ENCODE measurements at regions of chr11 and their contacts with region 1.

Region 1: GRCh38 chr11:35082321-35083182 is 56.4 kb upstream of the CD44 start:
- DNase-seq: peak; percentile 92
- H3K4me3 Mint-ChIP-seq: peak overlapping the region; percentile 77
- H3K27ac Mint-ChIP-seq: peak overlapping the region; percentile 91
- H3K4me1 Mint-ChIP-seq: peaks cover 84% of the 10 kb centered on the region
- H3K27me3 Mint-ChIP-seq: no peaks in the 10 kb centered on the region

Region 2: DNA sequence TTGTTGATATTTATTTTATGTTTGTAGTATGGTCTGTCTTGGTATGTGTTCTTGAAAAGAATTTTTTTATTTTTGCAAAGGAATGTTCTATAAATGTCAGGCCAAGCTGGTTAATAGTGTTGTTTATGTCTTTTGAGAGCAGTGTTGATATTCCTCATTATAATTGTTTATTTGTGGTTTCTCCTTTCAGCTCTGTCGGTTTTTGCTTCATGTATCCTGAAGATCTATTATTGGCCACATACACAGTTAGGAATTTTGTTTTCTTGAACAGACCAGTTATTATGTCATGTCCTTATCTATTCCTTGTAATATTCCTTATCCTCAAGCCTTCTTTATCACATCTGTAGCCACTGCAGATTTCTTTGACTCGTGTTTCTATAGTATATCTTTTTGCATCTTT is 109.7 kb before region 1 on chr11:
- CTCF ChIA-PET with region 1: no interaction called
- POLR2A ChIA-PET with region 1: no interaction called
- DNase-seq: no peak
- H3K4me3 Mint-ChIP-seq: no peak overlapping the region
- H3K27ac Mint-ChIP-seq: no peak overlapping the region
- H3K4me1 Mint-ChIP-seq: peaks cover 3% of the 10 kb centered on the region
- H3K27me3 Mint-ChIP-seq: no peaks in the 10 kb centered on the region

Region 3: DNA sequence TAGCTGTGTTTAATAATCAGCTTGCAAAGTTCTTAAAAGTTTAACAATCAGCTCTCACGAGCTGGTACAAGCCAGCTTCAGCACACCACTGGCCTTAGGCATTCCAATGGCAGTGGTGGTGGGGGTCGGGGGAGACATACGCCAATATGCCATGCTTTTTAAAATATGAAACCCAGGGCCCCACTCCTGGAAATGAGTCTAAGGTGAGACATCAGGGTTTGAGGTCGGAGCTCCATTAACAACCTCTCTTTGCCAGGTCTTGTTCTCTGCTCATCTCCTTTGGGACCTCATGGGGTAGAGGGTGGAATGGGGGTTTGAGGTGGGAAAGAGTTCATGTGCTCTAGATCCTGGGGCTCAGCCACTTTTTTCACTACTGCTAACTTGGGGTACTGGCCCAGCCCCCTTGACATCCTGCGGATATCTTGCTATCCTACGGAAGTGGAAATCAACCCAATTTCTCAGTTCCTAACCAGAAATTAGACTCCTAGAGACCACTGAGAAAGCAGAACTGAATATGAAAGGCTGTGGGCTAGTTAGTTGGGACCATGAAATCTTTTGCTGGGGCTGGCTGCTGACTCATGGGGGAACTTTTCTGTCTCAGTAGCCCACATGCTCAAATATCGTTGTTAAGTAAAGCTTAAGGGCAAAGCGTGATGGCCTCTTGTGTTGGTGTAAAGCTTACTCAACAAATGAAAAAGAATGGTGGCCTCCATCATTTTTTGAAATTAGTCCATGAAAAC is 76.0 kb before region 1 on chr11:
- CTCF ChIA-PET with region 1: no interaction called
- POLR2A ChIA-PET with region 1: interaction called, 10 read pairs
- DNase-seq: peak; percentile 45
- H3K4me3 Mint-ChIP-seq: no peak overlapping the region
- H3K27ac Mint-ChIP-seq: peak overlapping the region; percentile 67
- H3K4me1 Mint-ChIP-seq: peaks cover 49% of the 10 kb centered on the region
- H3K27me3 Mint-ChIP-seq: peaks cover 11% of the 10 kb centered on the region

Region 4: DNA sequence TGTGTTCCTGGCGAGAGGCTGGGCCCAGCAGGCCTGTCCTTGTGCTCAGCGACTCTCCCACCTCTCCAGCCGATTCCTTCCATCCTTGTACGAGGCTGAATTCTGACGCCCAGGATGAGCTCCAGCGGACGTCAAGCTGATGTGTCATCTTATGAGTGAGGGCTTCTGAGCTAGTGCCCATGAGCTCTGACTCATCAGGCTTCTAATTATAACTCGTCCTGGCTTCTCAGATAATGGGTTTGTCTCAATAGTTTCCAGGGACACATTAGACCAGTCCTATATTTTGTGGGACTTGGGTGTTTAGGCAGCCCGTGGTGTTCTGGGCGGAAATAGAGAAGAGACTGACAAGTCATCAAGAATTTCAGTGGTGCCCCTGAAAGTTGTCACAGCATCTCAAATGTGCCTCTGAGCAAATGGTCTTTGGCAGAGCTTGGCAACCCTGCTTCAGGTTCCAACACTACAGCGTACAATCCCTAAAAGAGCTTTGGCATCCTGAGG is 51.8 kb before region 1 on chr11:
- CTCF ChIA-PET with region 1: interaction called, 4 read pairs
- POLR2A ChIA-PET with region 1: interaction called, 10 read pairs
- DNase-seq: peak; percentile 62
- H3K4me3 Mint-ChIP-seq: peak overlapping the region; percentile 69
- H3K27ac Mint-ChIP-seq: peak overlapping the region; percentile 95
- H3K4me1 Mint-ChIP-seq: peaks cover 68% of the 10 kb centered on the region
- H3K27me3 Mint-ChIP-seq: peaks cover 5% of the 10 kb centered on the region

Region 5: DNA sequence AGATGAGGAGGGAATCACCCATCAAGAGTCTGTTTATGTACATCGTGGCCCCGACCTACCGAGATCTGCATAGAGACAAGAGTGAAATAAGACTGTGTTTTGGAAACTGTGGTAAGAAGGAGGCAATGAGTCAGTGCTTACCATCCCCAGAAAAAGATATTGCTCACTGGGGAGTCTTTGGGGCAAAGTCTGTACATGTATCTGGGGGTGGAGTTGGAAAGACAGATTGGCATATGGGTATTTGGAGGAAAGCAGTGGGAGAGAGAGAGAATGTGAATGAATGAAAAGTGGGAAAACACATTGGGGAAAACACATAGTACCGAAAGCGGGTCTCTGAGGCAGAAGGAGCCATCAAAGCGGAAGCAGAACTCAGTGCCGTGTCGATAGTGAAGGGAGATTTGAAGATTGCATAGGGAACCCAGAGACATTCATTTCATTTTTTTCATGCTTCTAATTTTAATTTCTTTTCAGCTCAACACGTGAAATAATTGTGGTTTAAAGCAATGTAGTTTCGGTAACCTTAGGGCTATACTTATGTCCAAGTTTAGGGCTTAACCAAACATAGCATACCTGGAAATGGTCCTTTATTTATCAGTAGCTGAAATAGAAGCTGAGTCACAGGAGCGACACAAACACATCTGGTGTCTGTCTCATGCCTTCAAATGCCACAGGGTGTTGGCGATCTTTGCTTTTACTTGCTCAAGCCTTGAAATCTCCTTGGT is 42.2 kb before region 1 on chr11:
- CTCF ChIA-PET with region 1: interaction called, 8 read pairs
- POLR2A ChIA-PET with region 1: interaction called, 22 read pairs
- DNase-seq: peak; percentile 74
- H3K4me3 Mint-ChIP-seq: peak overlapping the region; percentile 82
- H3K27ac Mint-ChIP-seq: peak overlapping the region; percentile 99
- H3K4me1 Mint-ChIP-seq: peaks cover 75% of the 10 kb centered on the region
- H3K27me3 Mint-ChIP-seq: peaks cover 13% of the 10 kb centered on the region

Region 6: DNA sequence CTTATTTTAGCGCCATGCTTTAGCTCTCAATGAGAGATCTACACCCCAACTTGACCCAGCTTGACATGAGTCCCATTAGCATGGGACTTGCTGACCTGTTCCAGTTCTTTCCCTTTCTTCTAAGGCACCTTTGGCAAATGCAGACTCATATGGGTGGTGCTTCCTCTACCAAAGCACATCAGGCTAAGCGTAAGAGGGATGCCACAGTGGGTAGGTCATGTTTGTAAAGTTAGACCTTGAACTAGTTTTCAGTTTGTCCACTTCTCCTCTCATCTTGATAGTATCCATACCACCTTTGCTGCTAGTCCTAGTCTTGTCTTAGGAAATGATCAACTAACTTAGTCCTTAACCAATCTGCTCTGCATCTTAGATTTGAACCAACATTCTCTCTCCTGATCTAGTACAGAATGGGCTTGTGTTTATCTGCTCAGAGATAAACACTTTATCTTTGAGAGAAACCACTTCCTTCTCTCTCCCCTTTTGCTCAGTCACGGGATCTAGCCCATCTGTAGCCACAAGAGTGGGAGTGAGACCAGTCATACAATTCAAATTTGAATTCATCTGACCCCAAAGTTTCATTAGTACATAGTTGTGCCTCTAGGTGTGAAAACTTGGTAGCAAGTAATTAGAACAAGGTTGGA is 15.6 kb before region 1 on chr11:
- CTCF ChIA-PET with region 1: interaction called, 3 read pairs
- POLR2A ChIA-PET with region 1: interaction called, 39 read pairs
- DNase-seq: peak; percentile 62
- H3K4me3 Mint-ChIP-seq: peak overlapping the region; percentile 6
- H3K27ac Mint-ChIP-seq: peak overlapping the region; percentile 79
- H3K4me1 Mint-ChIP-seq: peaks cover 29% of the 10 kb centered on the region
- H3K27me3 Mint-ChIP-seq: peaks cover 4% of the 10 kb centered on the region

Region 7: DNA sequence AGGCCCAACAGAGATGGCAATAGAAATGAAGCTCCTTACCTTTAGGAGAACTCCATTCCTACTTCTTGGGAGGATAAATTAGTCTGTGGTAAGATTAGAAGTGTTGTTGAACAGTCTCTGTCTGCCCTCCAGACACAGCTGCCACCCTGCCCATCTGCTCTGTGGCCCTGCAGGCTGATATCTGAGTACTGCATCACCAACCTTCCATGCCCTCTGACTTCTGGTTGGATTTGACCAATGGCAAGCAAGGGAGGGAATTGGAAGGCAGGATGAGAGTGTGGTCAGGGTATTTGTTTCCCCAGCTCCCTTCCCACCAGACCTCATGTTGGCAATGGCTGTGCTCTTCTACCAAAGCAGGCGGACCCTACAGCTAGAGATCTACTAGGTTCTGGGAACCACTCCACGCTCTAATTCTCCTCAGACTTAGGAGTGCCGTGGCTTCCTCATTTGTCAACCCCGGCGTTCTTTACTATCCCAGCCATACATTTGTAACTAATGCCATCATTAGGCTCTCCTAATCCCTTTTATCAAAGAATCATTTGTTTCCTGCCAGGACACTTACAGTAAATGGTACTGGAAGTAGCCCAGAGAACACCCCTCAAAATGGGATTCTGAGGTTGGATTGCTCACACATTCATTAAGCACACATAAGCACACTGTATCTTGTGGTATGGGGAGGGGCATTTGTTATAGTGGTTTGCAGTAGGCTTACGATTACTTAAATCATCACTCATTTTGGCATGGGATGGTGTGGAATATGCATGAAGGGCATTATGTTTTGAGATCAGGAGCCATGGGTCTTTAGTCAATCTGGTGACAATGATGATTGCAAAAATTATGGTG is 21.0 kb after region 1 on chr11:
- CTCF ChIA-PET with region 1: no interaction called
- POLR2A ChIA-PET with region 1: no interaction called
- DNase-seq: no peak
- H3K4me3 Mint-ChIP-seq: no peak overlapping the region
- H3K27ac Mint-ChIP-seq: no peak overlapping the region
- H3K4me1 Mint-ChIP-seq: peaks cover 12% of the 10 kb centered on the region
- H3K27me3 Mint-ChIP-seq: no peaks in the 10 kb centered on the region

Region 8: DNA sequence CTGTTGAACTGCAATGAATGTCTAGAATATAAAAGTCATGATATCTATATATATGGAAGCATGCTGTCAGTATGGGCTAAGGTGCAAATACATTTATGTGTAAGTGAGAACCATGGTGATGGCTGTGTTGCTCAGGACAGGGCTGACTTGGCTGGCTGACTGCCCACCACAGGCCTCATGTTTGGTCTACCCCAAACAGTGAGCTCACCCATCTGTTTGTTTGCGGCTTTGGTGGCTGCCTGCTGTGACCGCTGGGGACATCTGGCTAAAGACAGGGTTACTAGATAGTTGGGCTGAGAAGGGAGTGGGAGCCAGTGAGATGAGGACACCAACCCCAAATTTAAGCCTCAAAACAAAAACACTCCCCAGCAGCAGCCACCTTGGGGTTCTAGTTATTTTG is 62.7 kb after region 1 on chr11:
- CTCF ChIA-PET with region 1: interaction called, 10 read pairs
- POLR2A ChIA-PET with region 1: interaction called, 50 read pairs
- DNase-seq: peak; percentile 55
- H3K4me3 Mint-ChIP-seq: peak overlapping the region; percentile 70
- H3K27ac Mint-ChIP-seq: peak overlapping the region; percentile 87
- H3K4me1 Mint-ChIP-seq: peaks cover 82% of the 10 kb centered on the region
- H3K27me3 Mint-ChIP-seq: no peaks in the 10 kb centered on the region

Region 9: DNA sequence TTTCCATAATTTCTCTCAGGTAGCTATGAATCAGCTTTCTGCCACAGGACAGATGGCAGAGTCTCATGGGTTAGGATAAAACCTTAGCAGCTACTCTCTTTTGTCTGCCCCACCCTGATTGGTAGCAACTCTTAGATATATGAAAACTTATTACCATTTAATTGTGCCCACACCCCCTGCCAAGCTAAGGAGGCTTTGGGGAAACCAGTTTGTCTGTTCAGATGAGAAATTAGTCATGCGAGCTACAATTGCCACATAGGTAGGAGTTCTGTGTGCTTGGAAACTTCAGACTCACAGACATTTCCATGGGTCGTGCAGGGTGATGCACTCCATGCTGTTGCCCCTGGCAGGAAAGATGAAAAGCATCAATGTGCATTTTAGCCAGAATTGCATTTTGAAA is 96.3 kb after region 1 on chr11:
- CTCF ChIA-PET with region 1: no interaction called
- POLR2A ChIA-PET with region 1: interaction called, 10 read pairs
- DNase-seq: no peak
- H3K4me3 Mint-ChIP-seq: no peak overlapping the region
- H3K27ac Mint-ChIP-seq: peak overlapping the region; percentile 31
- H3K4me1 Mint-ChIP-seq: peaks cover 88% of the 10 kb centered on the region
- H3K27me3 Mint-ChIP-seq: no peaks in the 10 kb centered on the region

Region 10: GRCh38 chr11:35334385-35335090 is 252.0 kb after region 1 on chr11:
- CTCF ChIA-PET with region 1: no interaction called
- POLR2A ChIA-PET with region 1: no interaction called
- DNase-seq: no peak
- H3K4me3 Mint-ChIP-seq: no peak overlapping the region
- H3K27ac Mint-ChIP-seq: no peak overlapping the region
- H3K4me1 Mint-ChIP-seq: peaks cover 42% of the 10 kb centered on the region
- H3K27me3 Mint-ChIP-seq: no peaks in the 10 kb centered on the region